Posterior vena cava (tissue), 2 donors: ENCODE measurements at regions of chr9 and their contacts with region 1.

Region 1: GRCh38 chr9:26800322-26800721 is 92.3 kb downstream of the CAAP1 start:
- DNase-seq: no peak

Region 2: GRCh38 chr9:26856413-26857032 is 56.2 kb after region 1 on chr9:
- intact Hi-C with region 1: loop called in 1 of 2 experiments (anchors 2 kb)
- DNase-seq: no peak